PC-3 (cell line): ENCODE measurements at regions of chr12 and their contacts with region 1.

Region 1: DNA sequence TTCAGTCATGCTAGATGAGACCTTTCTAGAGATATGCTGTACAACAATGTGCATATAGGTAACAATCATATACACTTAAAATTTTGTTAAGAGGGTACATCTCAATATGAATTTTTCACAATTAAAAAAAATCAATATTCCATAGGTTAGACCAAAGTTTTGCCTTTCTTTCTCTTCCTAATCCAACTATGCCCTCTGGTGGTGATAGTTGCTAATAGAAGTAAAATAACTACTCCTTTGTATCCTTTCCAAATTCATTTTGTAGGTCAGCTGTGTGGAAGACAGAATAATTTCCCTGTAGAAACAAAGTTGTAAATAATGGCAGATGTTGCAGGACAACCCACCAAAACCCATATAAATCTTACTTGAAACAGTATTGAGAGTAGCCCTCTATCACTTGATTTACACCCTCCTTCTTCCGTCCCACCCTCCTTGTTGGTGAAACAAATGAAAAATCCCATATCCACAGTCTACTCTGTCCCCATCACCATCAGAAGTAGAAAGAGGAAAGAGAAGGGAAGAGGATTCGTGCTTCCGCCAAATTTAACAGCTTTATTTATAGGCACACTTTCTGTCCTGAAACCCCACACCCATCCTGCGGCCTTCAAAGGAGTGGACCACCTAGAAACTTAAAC is 34.2 kb upstream of the KICS2 start:
- DNase-seq: peak; percentile 85
- ATAC-seq: peak; percentile 38
- H3K4me3 ChIP-seq: no peak overlapping the region
- H3K27ac ChIP-seq: no peak overlapping the region
- H3K4me1 ChIP-seq: no peaks in the 10 kb centered on the region
- H3K27me3 ChIP-seq: no peaks in the 10 kb centered on the region
- CTCF ChIP-seq: peak; percentile 89

Region 2: GRCh38 chr12:63978519-63978918 is 277.8 kb before region 1 on chr12:
- CTCF ChIA-PET with region 1: no interaction called
- POLR2A ChIA-PET with region 1: no interaction called
- intact Hi-C with region 1: loop called (anchors 10 kb)
- DNase-seq: peak; percentile 96
- ATAC-seq: peak; percentile 79
- H3K4me3 ChIP-seq: no peak overlapping the region
- H3K27ac ChIP-seq: peak overlapping the region; percentile 63
- H3K4me1 ChIP-seq: peaks cover 54% of the 10 kb centered on the region
- H3K27me3 ChIP-seq: no peaks in the 10 kb centered on the region
- CTCF ChIP-seq: no peak

Region 3: DNA sequence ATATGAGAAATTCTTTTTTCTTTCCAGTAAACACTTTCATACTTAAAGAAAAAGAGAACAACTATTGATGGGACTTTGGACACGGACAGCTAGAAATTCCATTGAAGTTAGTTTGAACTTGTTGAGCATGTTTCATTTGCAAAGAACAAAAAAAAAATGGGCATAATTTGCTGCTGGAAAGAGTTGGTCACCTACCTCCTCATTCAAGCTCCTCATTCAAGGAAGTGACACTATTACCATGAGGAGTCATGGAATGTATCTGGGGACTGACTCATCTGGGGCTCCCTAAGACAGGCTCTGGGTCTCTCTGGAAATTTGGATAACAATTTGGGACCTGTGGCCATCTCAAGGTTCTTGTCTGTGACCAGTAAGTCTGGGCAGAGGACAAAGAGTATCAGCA is 84.6 kb before region 1 on chr12:
- CTCF ChIA-PET with region 1: no interaction called
- POLR2A ChIA-PET with region 1: no interaction called
- intact Hi-C with region 1: no loop called
- DNase-seq: peak; percentile 88
- ATAC-seq: peak; percentile 88
- H3K4me3 ChIP-seq: no peak overlapping the region
- H3K27ac ChIP-seq: peak overlapping the region; percentile 70
- H3K4me1 ChIP-seq: peaks cover 28% of the 10 kb centered on the region
- H3K27me3 ChIP-seq: no peaks in the 10 kb centered on the region
- CTCF ChIP-seq: no peak

Region 4: DNA sequence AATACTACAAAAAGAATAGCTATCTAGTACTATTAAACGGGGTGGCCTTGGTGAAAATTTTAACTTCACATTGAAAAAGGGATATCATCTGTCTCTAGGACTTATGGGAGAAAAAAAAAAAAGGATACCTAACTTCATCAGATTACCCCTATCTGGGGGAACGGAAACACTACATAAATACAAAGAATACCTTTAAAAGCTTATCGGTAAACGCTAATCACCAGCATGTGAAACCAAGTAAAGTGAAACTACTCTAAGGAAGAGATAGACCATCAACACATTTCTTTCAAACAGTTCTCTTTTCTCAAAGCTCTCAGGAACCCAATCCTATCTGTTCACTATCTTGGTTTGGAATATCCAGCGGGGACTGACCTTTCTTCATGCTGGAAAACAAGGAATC is 37.7 kb before region 1 on chr12:
- CTCF ChIA-PET with region 1: no interaction called
- POLR2A ChIA-PET with region 1: no interaction called
- intact Hi-C with region 1: no loop called
- DNase-seq: no peak
- ATAC-seq: no peak
- H3K4me3 ChIP-seq: no peak overlapping the region
- H3K27ac ChIP-seq: no peak overlapping the region
- H3K4me1 ChIP-seq: peaks cover 14% of the 10 kb centered on the region
- H3K27me3 ChIP-seq: no peaks in the 10 kb centered on the region
- CTCF ChIP-seq: no peak